ENCODE measurements at regions of chr1 and their contacts with region 1.

Region 1: GRCh38 chr1:147622731-147623130 is 47.6 kb downstream of the ACP6 start:
- DNase-seq: no peak
- H3K4me3 ChIP-seq: no peak overlapping the region
- H3K27ac ChIP-seq: no peak overlapping the region
- H3K4me1 ChIP-seq: peaks cover 0 to 8% (median 6%) of the 10 kb centered on the region in 4 donors
- H3K27me3 ChIP-seq: no peaks in the 10 kb centered on the region
- CTCF ChIP-seq: no peak
- EP300 ChIP-seq: no peak
- POLR2A ChIP-seq: no peak

Region 2: DNA sequence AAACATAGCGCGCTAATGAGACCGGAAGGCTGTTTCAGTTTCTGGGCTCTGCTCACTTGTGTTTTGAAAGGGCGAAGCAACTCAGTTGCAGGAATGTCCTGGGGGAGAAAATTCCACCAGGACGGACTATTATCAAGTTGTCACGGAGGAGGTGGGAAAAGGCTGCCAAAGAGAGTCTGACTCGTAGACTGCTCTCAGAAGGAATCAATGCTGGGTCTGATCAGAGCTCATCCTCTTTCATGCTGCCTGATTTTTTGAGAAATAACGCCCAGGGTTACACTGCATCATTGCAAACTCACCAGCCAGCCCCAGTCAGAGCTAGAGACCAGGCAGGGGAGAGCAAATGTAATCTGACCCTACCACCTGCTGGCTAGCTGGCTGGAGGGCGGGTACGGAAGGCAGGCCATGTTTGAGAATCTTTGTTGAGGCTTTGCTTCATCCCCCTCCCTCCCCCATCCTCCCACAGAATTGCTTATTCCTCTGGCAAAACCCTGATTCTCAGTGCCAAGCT is 117.9 kb before region 1 on chr1:
- in situ Hi-C with region 1: no loop called
- intact Hi-C with region 1: loop called (anchors 5 kb)
- DNase-seq: no peak
- H3K4me3 ChIP-seq: no peak overlapping the region
- H3K27ac ChIP-seq: no peak overlapping the region
- H3K4me1 ChIP-seq: peaks cover 0 to 2% (median 0%) of the 10 kb centered on the region in 4 donors
- H3K27me3 ChIP-seq: no peaks in the 10 kb centered on the region
- CTCF ChIP-seq: no peak
- EP300 ChIP-seq: no peak
- POLR2A ChIP-seq: no peak

Region 3: DNA sequence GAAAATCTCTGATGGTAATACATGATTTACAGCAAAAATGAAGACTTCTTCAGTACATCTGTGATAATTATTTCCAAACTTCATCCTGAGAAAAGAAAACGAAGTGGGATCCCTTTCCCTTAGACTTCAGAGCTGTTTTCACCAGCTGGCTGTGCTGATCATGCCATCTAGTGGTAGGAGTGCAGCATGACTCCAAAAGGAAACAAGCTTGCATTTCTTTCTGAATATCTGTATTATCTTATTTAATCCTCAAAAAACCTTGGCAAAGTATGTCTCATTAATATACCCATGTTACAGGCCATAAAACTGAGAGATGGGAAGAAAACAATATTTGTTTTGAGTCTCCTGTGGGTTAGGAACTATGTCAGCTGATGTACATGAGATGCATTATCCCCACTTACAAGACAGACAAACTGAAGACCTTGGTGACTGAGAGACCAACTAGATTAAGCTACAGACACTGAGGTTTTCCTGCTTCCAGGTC is 270.0 kb after region 1 on chr1:
- in situ Hi-C with region 1: no loop called
- intact Hi-C with region 1: no loop called
- DNase-seq: no peak
- H3K4me3 ChIP-seq: no peak overlapping the region
- H3K27ac ChIP-seq: no peak overlapping the region
- H3K4me1 ChIP-seq: no peaks in the 10 kb centered on the region
- H3K27me3 ChIP-seq: peaks cover 4% of the 10 kb centered on the region
- CTCF ChIP-seq: peak; percentile 82 to 96 (median 91)
- EP300 ChIP-seq: no peak
- POLR2A ChIP-seq: no peak